ENCODE measurements at regions of chr2 and their contacts with region 1.

Region 1: GRCh38 chr2:196372811-196373664 is 201.7 kb upstream of the STK17B start:
- DNase-seq: peak; percentile 80
- H3K4me3 ChIP-seq: no peak overlapping the region
- H3K27ac ChIP-seq: peak overlapping the region; percentile 29
- H3K4me1 ChIP-seq: peaks cover 25% of the 10 kb centered on the region
- H3K27me3 ChIP-seq: no peaks in the 10 kb centered on the region
- CTCF ChIP-seq: no peak
- POLR2A ChIP-seq: no peak

Region 2: DNA sequence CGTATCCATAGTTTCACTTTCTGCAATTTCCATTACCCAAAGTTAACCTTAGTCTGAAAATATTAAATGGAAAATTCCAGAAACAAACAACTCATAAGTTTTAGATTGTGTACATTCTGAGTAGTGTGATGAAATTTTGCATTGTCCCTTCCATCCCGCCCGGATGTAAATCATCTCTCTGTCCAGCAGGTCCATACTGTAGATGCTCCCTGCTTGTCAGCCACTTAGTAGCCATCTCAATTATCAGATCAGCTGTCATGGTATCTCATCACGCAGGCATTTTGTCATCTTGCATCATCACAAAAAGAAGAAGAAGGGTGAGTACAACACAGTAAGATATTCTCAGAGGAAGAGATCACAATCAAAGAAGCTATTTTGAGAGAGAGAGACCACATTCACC is 16.7 kb before region 1 on chr2:
- CTCF ChIA-PET with region 1: interaction called, 12 read pairs
- POLR2A ChIA-PET with region 1: no interaction called
- dilution Hi-C with region 1: no loop called
- intact Hi-C with region 1: no loop called
- DNase-seq: peak; percentile 48
- H3K4me3 ChIP-seq: peak overlapping the region in 2 of 3 experiments; percentile 8 to 36
- H3K27ac ChIP-seq: no peak overlapping the region
- H3K4me1 ChIP-seq: peaks cover 36% of the 10 kb centered on the region
- H3K27me3 ChIP-seq: no peaks in the 10 kb centered on the region
- CTCF ChIP-seq: no peak
- POLR2A ChIP-seq: no peak

Region 3: DNA sequence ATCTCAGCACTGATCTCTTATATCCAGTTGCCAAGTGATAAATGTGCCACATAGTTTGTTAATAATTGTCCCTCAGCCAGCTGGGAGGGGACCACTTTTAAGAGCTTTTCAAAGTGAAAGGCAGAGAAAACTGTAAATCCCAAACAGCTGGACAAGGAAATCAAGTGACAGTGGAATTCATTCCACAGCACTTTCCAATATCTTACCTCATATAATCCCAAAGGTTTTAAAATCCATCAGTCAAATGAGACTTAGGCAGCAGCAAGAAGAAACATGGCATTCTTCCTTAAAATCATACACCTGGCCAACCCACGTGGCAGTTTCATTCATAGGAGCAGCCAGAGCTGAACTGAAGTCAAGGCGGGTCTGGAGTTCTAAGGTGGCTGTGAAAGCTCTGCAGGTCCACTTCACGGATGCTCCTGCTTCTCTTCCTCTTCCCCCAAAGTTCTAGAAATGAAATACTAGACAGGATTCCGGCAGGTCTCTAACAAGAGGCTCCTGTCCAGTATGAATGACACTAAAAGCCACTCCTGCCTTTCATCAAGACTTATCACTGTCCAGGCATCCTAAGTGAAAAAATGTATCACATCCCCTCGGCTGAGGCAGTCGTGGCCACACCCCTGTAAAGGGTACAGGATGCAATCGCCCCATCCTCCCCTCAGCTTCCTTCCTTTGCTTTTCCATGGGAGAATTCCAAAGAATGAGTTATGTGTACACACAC is 11.3 kb before region 1 on chr2:
- CTCF ChIA-PET with region 1: interaction called, 12 read pairs
- POLR2A ChIA-PET with region 1: no interaction called
- dilution Hi-C with region 1: no loop called
- intact Hi-C with region 1: loop called (anchors 1 kb)
- DNase-seq: peak; percentile 85
- H3K4me3 ChIP-seq: peak overlapping the region; percentile 34 to 94 (median 57)
- H3K27ac ChIP-seq: peak overlapping the region; percentile 73
- H3K4me1 ChIP-seq: peaks cover 58% of the 10 kb centered on the region
- H3K27me3 ChIP-seq: no peaks in the 10 kb centered on the region
- CTCF ChIP-seq: no peak
- POLR2A ChIP-seq: peak; percentile 80

Region 4: DNA sequence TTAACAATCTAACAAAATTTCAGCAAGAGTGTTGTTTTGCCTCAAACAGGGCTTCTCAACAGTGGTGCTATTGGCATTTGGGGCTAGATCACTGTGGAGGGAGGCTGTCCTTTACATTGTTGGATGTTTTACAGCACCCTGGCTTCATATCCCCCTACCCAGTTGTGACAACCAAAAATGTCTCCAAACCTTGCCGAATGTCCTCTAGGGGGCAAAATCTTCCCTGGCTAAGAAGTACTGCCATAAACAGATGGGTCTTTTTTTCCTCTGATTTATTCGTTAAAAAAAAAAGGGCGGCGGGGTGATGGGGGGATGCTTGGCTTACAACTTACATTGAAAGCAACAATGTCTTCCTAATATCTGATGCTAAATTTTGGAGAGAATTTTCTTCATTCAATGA is 58.9 kb after region 1 on chr2:
- CTCF ChIA-PET with region 1: interaction called, 4 read pairs
- POLR2A ChIA-PET with region 1: no interaction called
- dilution Hi-C with region 1: no loop called
- intact Hi-C with region 1: loop called (anchors 5 kb)
- DNase-seq: peak; percentile 28
- H3K4me3 ChIP-seq: no peak overlapping the region
- H3K27ac ChIP-seq: no peak overlapping the region
- H3K4me1 ChIP-seq: peaks cover 55% of the 10 kb centered on the region
- H3K27me3 ChIP-seq: no peaks in the 10 kb centered on the region
- CTCF ChIP-seq: peak; percentile 29 to 38
- POLR2A ChIP-seq: no peak